ENCODE measurements at regions of chr19 and their contacts with region 1.

Region 1: GRCh38 chr19:7903244-7904073 is at the start of gene MAP2K7:
- DNase-seq: peak; percentile 99
- H3K4me3 ChIP-seq: peak within 1 kb of the TSS; percentile 91
- H3K4me3 Mint-ChIP-seq: peak within 1 kb of the TSS; percentile 92
- H3K27ac Mint-ChIP-seq: peak within 1 kb of the TSS; percentile 89
- H3K4me1 ChIP-seq: peaks cover 12% of the 10 kb centered on the region; the same call in 1 of the 2 replicates
- H3K4me1 Mint-ChIP-seq: peaks cover 6% of the 10 kb centered on the region
- H3K27me3 ChIP-seq: no peaks in the 10 kb centered on the region
- H3K27me3 Mint-ChIP-seq: no peaks in the 10 kb centered on the region
- CTCF ChIP-seq: peak; percentile 41 to 71
- total RNA-seq, gene MAP2K7: 37.4 and 42.6 TPM in 2 replicates

Region 2: DNA sequence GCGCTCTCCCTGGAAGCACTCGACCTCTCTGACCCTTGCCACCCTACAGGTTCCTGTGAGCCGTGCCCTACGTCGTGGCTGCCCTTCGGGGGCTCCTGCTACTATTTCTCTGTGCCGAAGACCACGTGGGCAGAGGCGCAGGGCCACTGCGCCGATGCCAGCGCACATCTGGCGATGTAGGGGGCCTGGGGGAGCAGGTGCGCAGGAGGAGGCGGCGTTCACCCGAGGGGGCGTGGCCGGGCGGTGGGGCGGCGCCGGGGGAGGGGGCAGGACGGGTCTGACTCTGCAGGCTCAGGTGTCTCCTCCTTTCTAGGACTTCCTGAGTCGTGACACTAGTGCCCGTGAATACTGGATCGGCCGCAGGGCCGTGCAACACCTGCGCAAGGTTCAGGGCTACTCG is 114.0 kb before region 1 on chr19:
- CTCF ChIA-PET with region 1: no interaction called
- POLR2A ChIA-PET with region 1: no interaction called
- intact Hi-C with region 1: no loop called
- DNase-seq: no peak
- H3K4me3 ChIP-seq: no peak overlapping the region
- H3K4me3 Mint-ChIP-seq: no peak overlapping the region
- H3K27ac Mint-ChIP-seq: no peak overlapping the region
- H3K4me1 ChIP-seq: peaks cover 21% of the 10 kb centered on the region
- H3K4me1 Mint-ChIP-seq: peaks cover 25% of the 10 kb centered on the region
- H3K27me3 ChIP-seq: no peaks in the 10 kb centered on the region
- H3K27me3 Mint-ChIP-seq: no peaks in the 10 kb centered on the region
- CTCF ChIP-seq: no peak

Region 3: DNA sequence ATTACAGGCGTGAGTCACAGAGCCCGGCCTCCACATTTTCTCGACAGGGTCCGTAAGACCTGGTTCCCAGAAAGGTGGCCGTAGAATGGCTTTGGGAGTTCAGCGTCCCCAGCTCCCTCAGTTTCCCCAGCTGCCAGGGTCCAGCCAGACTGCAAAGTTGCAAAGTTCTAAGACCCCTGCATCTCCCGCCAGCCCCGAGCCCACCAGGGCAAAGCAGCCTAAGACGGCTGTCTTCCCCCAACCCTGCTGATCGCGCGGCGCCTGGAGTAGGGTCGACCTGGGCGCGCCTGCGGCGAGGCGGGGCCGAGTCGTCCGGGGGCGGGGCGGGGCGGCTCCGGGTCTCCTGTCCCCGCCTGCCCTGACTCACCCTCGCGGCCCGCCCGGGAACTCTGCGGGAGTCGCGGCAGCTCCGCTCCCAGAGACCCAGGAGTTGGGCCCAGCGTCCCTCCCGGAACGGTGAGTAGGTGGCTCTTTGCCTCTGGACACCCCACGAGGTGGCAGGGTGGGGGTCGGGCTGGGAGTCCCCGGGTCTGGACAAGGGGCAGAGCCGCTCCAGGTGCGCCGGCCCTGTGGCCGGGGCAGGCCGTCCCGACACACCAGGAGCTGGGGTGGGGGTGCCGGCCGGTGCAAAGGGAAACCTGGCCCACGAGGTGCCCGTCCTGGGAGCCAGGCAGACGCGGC is 15.2 kb before region 1 on chr19 and contains the start of gene LRRC8E:
- CTCF ChIA-PET with region 1: interaction called, 5 read pairs
- POLR2A ChIA-PET with region 1: interaction called, 8 read pairs
- intact Hi-C with region 1: loop called (anchors 2 kb)
- DNase-seq: peak; percentile 78 to 85
- H3K4me3 ChIP-seq: peak within 1 kb of the TSS; percentile 66
- H3K4me3 Mint-ChIP-seq: peak within 1 kb of the TSS; percentile 70
- H3K27ac Mint-ChIP-seq: peak within 1 kb of the TSS; percentile 19
- H3K4me1 ChIP-seq: peaks cover 10% of the 10 kb centered on the region; the same call in 1 of the 2 replicates
- H3K4me1 Mint-ChIP-seq: no peaks in the 10 kb centered on the region
- H3K27me3 ChIP-seq: no peaks in the 10 kb centered on the region
- H3K27me3 Mint-ChIP-seq: no peaks in the 10 kb centered on the region
- CTCF ChIP-seq: peak in 1 of 2 experiments; percentile 10
- total RNA-seq, gene LRRC8E: 6.5 and 6.7 TPM in 2 replicates

Region 4: GRCh38 chr19:7919610-7920518 is 16.4 kb after region 1 on chr19 and contains the start of gene SNAPC2:
- CTCF ChIA-PET with region 1: interaction called, 19 read pairs
- POLR2A ChIA-PET with region 1: interaction called, 69 read pairs
- intact Hi-C with region 1: no loop called
- DNase-seq: peak; percentile 96
- H3K4me3 ChIP-seq: peak within 1 kb of the TSS; percentile 63
- H3K4me3 Mint-ChIP-seq: peak within 1 kb of the TSS; percentile 87
- H3K27ac Mint-ChIP-seq: peak within 1 kb of the TSS; percentile 83
- H3K4me1 ChIP-seq: peaks cover 16% of the 10 kb centered on the region
- H3K4me1 Mint-ChIP-seq: peaks cover 7% of the 10 kb centered on the region
- H3K27me3 ChIP-seq: no peaks in the 10 kb centered on the region
- H3K27me3 Mint-ChIP-seq: no peaks in the 10 kb centered on the region
- CTCF ChIP-seq: no peak
- total RNA-seq, gene SNAPC2: 8.8 and 10.4 TPM in 2 replicates

Measured in Caco-2 (cell line).